ENCODE measurements at regions of chr5 and their contacts with region 1.

Region 1: GRCh38 chr5:172714491-172715421 is 56.2 kb downstream of the DUSP1 start:
- DNase-seq: peak; percentile 75
- CTCF ChIP-seq: peak; percentile 62

Region 2: DNA sequence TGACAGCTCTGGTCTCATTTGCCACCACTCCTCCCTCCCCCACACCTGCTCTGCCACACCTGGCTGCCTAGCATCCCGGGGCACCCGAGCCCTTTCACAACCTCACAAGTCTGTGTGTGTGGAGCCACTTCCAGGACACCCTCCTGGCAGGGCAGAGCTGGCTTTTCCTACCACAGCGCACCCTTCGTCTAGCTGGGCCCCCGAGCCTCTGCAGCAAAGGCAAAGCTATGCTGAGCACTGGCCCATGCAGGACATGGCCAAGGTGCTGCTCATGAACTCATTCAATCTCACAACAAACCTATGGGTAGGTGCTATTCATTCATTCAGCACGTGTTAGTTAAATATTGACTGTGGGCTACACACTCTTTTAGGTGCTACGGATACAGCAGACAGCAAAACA is 12.8 kb after region 1 on chr5:
- CTCF ChIA-PET with region 1: interaction called, 43 read pairs
- POLR2A ChIA-PET with region 1: no interaction called
- DNase-seq: no peak
- CTCF ChIP-seq: no peak

Region 3: DNA sequence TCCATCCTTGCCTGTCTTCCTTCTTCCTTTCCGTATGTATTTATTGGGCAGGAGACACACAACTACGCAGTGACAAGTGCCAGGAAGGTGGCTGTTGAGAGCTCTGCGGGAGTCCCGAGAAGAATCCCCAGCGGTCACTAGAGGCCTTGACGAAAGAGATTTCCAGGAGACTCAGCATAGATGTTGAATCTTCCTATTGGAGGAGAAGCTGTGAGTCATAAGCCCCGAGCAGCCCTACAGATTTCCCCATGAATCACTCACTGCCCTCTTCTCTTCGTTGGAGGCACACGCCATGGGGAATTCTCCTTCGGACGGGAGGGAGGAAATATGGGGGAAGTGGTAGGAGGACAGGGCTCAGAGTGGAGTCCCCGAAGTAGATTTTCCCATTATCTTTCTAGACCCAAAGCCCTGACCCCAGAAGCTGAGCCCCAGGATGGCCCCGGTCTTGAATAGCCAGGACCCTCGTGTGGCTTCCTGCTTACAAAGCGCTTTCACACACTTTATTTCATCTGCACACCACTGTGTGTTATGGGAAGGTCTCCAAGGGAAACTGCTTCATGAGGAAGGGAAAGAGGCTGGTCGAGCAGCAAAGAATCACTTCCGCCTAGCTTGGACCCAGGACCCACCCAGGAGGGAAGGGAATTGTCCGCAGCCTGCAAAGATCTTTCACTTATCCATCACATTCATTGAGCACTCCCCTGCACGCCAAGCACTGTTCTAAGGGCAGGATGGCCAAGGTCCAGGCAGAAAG is 43.5 kb after region 1 on chr5:
- CTCF ChIA-PET with region 1: interaction called, 31 read pairs
- POLR2A ChIA-PET with region 1: no interaction called
- DNase-seq: no peak
- CTCF ChIP-seq: no peak

Region 4: DNA sequence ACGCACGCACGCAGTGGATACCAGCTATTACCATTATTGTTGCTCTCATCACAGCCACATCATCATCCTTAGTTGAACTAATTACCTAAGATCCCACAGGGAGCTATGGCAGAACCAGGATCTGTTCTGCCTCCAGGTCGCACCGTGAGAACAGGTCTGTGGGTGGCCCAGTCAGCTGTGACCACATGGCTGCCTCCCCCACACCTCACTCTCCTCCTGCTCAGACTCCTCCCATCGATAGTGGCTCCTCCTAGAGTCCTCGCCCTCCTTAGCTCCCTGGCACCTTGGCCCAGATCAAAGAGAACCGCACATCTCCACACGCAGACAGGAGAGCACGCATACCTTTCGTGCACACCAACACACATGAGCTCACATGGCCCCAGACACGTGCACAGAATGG is 212.0 kb after region 1 on chr5:
- CTCF ChIA-PET with region 1: interaction called, 282 read pairs
- POLR2A ChIA-PET with region 1: no interaction called
- DNase-seq: no peak
- CTCF ChIP-seq: no peak

Measured in GM10248 (cell line).